ENCODE measurements at regions of chrX and their contacts with region 1.

Region 1: GRCh38 chrX:138775517-138775916 is 64.0 kb upstream of the FGF13 start:
- DNase-seq: peak; percentile 21
- ATAC-seq: peak; percentile 80
- H3K4me3 ChIP-seq: no peak overlapping the region
- H3K27ac ChIP-seq: no peak overlapping the region
- H3K4me1 ChIP-seq: no peaks in the 10 kb centered on the region
- H3K27me3 ChIP-seq: no peaks in the 10 kb centered on the region; the same call in 1 of the 2 replicates
- CTCF ChIP-seq: peak; percentile 42
- POLR2A ChIP-seq: no peak
- RAD21 ChIP-seq: peak; percentile 35

Region 2: DNA sequence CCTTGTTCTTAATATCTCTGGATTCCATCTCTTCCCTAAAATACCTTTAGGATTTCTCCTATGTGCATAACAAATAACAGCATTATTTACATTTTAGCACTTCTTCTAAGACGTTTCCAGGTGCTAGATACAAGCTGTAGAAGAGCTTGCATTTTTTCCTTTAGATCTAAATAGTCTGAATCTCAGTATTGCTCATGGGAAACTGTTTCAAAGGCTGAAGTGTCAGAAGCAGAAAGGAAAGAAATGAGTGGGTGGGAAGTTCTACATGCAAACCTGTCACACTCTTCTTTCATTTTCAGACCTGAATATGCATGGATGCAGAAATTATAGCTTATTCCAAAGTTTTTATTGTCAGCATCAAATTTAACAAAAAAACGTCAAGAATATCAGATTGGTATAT is 105.8 kb before region 1 on chrX:
- CTCF ChIA-PET with region 1: no interaction called
- POLR2A ChIA-PET with region 1: no interaction called
- dilution Hi-C with region 1: no loop called
- in situ Hi-C with region 1: no loop called
- intact Hi-C with region 1: no loop called
- DNase-seq: no peak
- ATAC-seq: no peak
- H3K4me3 ChIP-seq: no peak overlapping the region
- H3K27ac ChIP-seq: no peak overlapping the region
- H3K4me1 ChIP-seq: no peaks in the 10 kb centered on the region
- H3K27me3 ChIP-seq: no peaks in the 10 kb centered on the region
- CTCF ChIP-seq: no peak
- POLR2A ChIP-seq: no peak
- RAD21 ChIP-seq: no peak

Region 3: GRCh38 chrX:139759637-139760036 is 984.1 kb after region 1 on chrX:
- CTCF ChIA-PET with region 1: interaction called, 3 read pairs
- POLR2A ChIA-PET with region 1: no interaction called
- dilution Hi-C with region 1: no loop called
- in situ Hi-C with region 1: no loop called
- intact Hi-C with region 1: loop called (anchors 2 kb)
- DNase-seq: peak; percentile 42
- ATAC-seq: peak; percentile 65; the same call in 1 of the 2 replicates
- H3K4me3 ChIP-seq: no peak overlapping the region
- H3K27ac ChIP-seq: no peak overlapping the region
- H3K4me1 ChIP-seq: no peaks in the 10 kb centered on the region
- H3K27me3 ChIP-seq: no peaks in the 10 kb centered on the region
- CTCF ChIP-seq: peak; percentile 57
- POLR2A ChIP-seq: no peak
- RAD21 ChIP-seq: peak; percentile 50; the same call in 1 of the 2 replicates